ENCODE measurements at regions of chr11 and their contacts with region 1.

Region 1: DNA sequence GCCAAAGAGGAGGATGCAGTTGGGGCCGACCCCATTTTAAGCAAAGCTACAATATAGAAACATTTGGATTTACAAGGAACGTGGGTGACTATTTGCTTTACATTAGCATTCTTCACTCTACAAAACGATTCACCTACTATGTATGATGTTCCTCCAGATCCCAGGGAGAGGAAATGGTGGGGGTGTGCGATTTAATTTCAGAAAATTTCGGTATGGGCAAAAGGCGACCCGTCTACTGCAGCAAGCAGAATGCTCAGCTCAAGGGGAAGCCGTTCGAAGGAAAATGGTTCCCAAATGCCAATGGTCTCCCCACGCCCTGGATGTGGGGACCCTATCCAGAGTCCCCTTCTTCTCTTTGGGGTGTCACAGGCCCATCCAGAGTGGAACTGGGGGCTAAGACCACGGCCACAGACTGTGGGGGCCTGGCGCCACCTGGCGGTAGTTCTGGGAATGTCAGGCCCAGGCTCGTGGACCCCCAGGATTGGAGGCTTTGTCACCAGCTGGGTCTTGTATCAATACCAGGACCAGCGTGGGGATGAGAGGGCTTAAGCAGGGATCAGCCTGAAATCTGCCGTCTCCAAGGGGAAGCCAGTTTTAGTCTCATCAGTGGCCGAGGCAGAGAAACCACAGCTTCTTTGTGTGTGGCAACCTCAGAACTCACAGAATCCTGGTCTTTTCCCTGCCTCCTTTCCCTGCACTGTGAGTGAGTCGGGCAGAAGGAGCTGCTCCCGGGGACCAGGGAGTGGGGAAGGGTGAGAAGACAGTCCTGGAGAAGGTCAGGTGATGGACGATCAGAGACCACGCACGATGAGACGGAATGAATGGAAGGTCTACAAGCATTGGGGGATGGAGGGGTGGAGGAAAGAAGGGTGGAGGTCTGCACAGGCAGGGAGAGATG is 8.4 kb downstream of the LRRC10B start:
- DNase-seq: no peak
- H3K4me3 ChIP-seq: no peak overlapping the region
- H3K27ac ChIP-seq: no peak overlapping the region
- H3K27me3 ChIP-seq: peaks cover 15% of the 10 kb centered on the region
- CTCF ChIP-seq: peak; percentile 97

Region 2: GRCh38 chr11:61439615-61440014 is 77.3 kb before region 1 on chr11:
- CTCF ChIA-PET with region 1: interaction called, 17 read pairs
- POLR2A ChIA-PET with region 1: no interaction called
- DNase-seq: no peak
- H3K4me3 ChIP-seq: no peak overlapping the region
- H3K27ac ChIP-seq: no peak overlapping the region
- H3K27me3 ChIP-seq: no peaks in the 10 kb centered on the region
- CTCF ChIP-seq: no peak

Region 3: DNA sequence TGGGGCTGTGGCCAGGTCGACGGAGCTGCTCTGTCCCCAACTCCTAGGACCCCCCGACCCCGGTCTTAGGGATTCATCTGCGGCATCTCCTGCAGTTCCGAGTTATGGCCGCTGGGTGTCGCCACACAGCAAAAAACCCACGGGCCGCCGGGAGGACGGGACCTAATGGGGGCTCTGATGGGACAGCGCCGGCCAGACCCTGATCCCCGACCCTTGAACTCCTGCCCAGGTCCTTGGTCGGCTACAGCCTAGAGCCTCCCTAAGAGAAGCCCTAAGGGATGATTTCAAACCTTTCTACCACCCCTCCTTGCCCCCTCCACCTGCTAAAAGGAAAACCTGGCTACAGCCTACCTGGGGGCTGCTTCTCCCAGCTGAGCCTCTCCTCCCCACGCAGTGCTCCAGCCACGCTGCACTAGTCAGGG is 39.2 kb before region 1 on chr11:
- CTCF ChIA-PET with region 1: interaction called, 139 read pairs
- POLR2A ChIA-PET with region 1: interaction called, 4 read pairs
- DNase-seq: no peak
- H3K4me3 ChIP-seq: no peak overlapping the region
- H3K27ac ChIP-seq: no peak overlapping the region
- H3K27me3 ChIP-seq: peaks cover 15% of the 10 kb centered on the region
- CTCF ChIP-seq: peak; percentile 87

Region 4: DNA sequence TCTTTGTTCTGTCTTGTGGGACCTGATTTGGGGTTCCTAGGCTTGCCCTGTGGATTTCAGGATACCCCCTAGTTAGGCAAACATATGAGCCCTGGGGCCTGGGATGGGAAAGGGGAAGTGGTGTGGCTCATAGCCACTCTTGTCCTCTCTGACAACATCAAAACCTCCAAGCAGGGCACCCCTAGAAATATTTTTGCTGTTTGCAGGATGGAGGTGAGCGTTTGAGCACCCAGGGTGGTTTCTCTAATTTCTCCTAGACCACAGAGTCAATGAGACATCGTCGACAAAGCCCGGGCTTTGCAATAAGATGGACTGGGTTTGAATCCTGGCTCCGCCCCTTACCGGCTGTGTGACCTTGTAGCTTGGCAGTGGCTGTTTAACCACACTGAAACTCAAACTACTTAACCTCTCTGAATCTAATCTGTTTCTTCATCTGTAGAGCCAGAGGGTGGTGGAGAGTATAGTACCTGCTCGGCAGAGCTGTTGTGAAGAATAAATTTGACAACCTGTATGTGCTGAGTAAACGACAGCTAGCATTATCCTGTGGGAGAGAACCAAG is 13.6 kb before region 1 on chr11:
- CTCF ChIA-PET with region 1: interaction called, 31 read pairs
- POLR2A ChIA-PET with region 1: no interaction called
- DNase-seq: no peak
- H3K4me3 ChIP-seq: no peak overlapping the region
- H3K27ac ChIP-seq: no peak overlapping the region
- H3K27me3 ChIP-seq: peaks cover 56% of the 10 kb centered on the region
- CTCF ChIP-seq: no peak

Region 5: GRCh38 chr11:61541598-61541997 is 24.7 kb after region 1 on chr11:
- CTCF ChIA-PET with region 1: interaction called, 24 read pairs
- POLR2A ChIA-PET with region 1: no interaction called
- DNase-seq: no peak
- H3K4me3 ChIP-seq: no peak overlapping the region
- H3K27ac ChIP-seq: no peak overlapping the region
- H3K27me3 ChIP-seq: peaks cover 30% of the 10 kb centered on the region
- CTCF ChIP-seq: no peak

Region 6: GRCh38 chr11:61639816-61640443 is 123.0 kb after region 1 on chr11:
- CTCF ChIA-PET with region 1: interaction called, 42 read pairs
- POLR2A ChIA-PET with region 1: no interaction called
- DNase-seq: no peak
- H3K4me3 ChIP-seq: no peak overlapping the region
- H3K27ac ChIP-seq: no peak overlapping the region
- H3K27me3 ChIP-seq: peaks cover 23% of the 10 kb centered on the region
- CTCF ChIP-seq: no peak

Measured in AG04450 (cell line).